Sigmoid colon (tissue), 7 donors: ENCODE measurements at regions of chr17 and their contacts with region 1.

Region 1: GRCh38 chr17:81484195-81484979 is 28.2 kb downstream of the ACTG1 start:
- DNase-seq: peak; percentile 94
- H3K4me3 ChIP-seq: peak overlapping the region in 3 of 4 donors; percentile 34 to 51 (median 44)
- H3K27ac ChIP-seq: peak overlapping the region in 1 of 4 donors; percentile 26
- H3K4me1 ChIP-seq: peaks cover 0 to 59% (median 49%) of the 10 kb centered on the region in 4 donors
- H3K27me3 ChIP-seq: peaks cover 0 to 14% (median 6%) of the 10 kb centered on the region in 3 donors
- CTCF ChIP-seq: peak; percentile 60 to 99 (median 84)
- EP300 ChIP-seq: no peak
- POLR2A ChIP-seq: no peak

Region 2: GRCh38 chr17:81071761-81072741 is 412.3 kb before region 1 on chr17:
- intact Hi-C with region 1: no loop called
- DNase-seq: no peak
- H3K4me3 ChIP-seq: no peak overlapping the region
- H3K27ac ChIP-seq: no peak overlapping the region
- H3K4me1 ChIP-seq: peaks cover 0 to 29% (median 0%) of the 10 kb centered on the region in 4 donors
- H3K27me3 ChIP-seq: no peaks in the 10 kb centered on the region
- CTCF ChIP-seq: no peak
- EP300 ChIP-seq: no peak
- POLR2A ChIP-seq: no peak

Region 3: DNA sequence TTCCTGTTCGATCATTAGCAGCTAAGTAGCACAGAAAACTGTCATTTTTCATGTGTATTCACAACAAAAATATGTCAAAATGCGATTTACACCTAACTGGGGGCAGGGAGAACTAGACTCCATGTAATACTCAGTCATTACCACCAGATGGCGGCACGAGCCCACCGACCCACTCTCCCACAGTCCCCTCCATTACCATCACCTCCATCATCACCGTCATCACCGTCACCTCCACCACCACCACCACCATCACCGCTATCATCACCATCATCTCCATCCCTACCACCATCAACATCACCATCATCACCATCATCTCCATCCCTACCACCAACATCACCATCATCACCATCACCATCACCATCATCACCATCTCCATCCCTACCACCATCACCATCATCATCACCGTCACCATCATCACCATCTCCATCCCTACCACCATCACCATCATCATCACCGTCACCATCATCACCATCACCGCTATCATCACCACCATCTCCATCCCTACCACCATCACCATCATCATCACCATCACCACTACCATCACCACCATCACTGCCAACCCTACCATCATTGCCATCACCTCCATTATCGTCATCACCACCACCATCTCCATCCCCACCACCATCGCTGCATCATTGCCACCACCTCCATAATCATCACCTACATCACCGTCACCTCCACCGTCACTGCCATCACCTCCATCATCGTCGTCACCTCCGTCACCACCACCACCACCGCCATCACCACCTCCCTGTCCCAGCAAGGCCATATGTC is 230.8 kb before region 1 on chr17:
- intact Hi-C with region 1: loop called (anchors 1 kb)
- DNase-seq: no peak
- H3K4me3 ChIP-seq: no peak overlapping the region
- H3K27ac ChIP-seq: peak overlapping the region in 1 of 4 donors; percentile 85
- H3K4me1 ChIP-seq: peaks cover 0 to 19% (median 18%) of the 10 kb centered on the region in 4 donors
- H3K27me3 ChIP-seq: no peaks in the 10 kb centered on the region
- CTCF ChIP-seq: peak; percentile 87 to 94 (median 90)
- EP300 ChIP-seq: no peak
- POLR2A ChIP-seq: no peak

Region 4: GRCh38 chr17:81289627-81290026 is 194.8 kb before region 1 on chr17:
- intact Hi-C with region 1: loop called (anchors 1 kb)
- DNase-seq: no peak
- H3K4me3 ChIP-seq: no peak overlapping the region
- H3K27ac ChIP-seq: no peak overlapping the region
- H3K4me1 ChIP-seq: peaks cover 0 to 42% (median 37%) of the 10 kb centered on the region in 4 donors
- H3K27me3 ChIP-seq: no peaks in the 10 kb centered on the region
- CTCF ChIP-seq: no peak
- EP300 ChIP-seq: no peak
- POLR2A ChIP-seq: no peak

Region 5: GRCh38 chr17:81401723-81402529 is 82.5 kb before region 1 on chr17:
- intact Hi-C with region 1: loop called (anchors 5 kb)
- DNase-seq: no peak
- H3K4me3 ChIP-seq: no peak overlapping the region
- H3K27ac ChIP-seq: peak overlapping the region; percentile 93 to 99 (median 97)
- H3K4me1 ChIP-seq: peaks cover 0 to 81% (median 73%) of the 10 kb centered on the region in 4 donors
- H3K27me3 ChIP-seq: no peaks in the 10 kb centered on the region
- CTCF ChIP-seq: no peak
- EP300 ChIP-seq: no peak
- POLR2A ChIP-seq: no peak